ENCODE measurements at regions of chr9 and their contacts with region 1.

Region 1: GRCh38 chr9:122125158-122125508 is 32.0 kb upstream of the TTLL11 start:
- DNase-seq: peak; percentile 91
- CTCF ChIP-seq: peak; percentile 93

Region 2: DNA sequence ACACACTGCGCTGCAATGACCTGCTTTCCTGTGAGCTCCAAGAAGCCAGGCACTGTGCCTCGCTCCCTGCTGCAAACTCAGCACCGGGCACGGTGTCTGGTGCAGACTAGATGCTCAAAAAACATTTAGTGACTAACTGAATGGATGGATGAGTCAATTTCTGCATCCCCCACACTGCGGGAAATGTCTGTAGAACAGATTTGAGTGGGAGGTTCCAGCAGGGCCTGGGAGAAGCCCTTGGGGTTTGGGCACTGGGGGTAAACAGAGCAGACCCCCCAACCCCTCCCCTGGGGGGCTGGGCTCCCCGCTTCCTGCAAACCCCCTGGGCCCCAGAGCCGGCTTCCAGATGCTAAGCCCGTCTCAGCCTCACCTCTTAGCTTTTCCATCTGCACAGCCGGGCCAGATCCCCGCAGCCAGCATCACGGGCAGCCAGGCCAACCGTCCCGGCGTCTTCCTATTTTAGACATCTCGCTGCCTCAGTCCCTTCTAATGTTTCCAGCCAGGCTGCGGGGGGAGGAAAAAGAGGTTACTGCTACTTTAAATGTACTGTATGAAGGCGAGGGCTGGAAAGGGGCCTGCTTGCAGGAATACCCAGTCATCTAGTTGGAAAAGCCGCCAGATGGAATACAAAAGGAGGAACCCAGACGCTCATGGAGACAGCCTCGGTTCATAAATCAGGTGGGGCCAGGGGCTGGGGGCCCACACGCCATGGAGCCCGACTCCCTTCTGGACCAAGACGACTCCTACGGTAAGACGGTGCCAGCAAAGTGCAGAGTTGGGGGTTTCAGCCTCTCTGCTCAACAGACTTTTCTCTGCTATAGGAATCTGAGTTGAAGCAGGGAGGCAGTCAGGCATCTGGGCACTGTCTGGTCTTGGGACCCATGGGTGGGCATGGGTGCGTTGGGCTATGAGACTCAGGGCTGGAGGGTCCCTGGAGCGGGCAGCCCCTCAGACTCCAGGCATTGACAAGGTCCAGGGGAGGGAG is 558.4 kb before region 1 on chr9:
- in situ Hi-C with region 1: no loop called
- DNase-seq: no peak
- CTCF ChIP-seq: no peak

Region 3: GRCh38 chr9:121827251-121827967 is 297.7 kb before region 1 on chr9:
- in situ Hi-C with region 1: no loop called
- DNase-seq: no peak
- CTCF ChIP-seq: no peak

Region 4: GRCh38 chr9:122350638-122351355 is 225.7 kb after region 1 on chr9:
- in situ Hi-C with region 1: loop called (anchors 10 kb)
- DNase-seq: peak; percentile 86
- CTCF ChIP-seq: peak; percentile 97

Region 5: DNA sequence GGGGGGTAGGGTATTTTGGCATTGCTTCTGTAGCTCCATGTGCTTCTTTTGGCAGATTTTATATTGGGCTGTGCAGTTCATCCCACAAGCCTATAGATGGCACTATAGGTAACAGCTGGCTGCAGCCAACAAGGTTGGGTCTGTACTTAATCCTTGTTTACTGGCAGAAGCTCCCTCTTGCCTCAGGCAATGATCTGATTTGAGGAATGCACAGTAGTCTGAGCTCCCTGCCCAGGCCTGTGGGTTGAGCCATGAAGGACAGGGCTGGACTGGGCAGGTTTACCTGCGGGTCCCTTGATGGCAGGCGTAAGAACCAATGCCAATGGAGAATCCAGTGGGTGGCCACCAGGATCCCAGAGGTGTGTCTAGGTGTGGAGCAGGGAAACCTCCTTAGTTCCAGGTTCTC is 373.8 kb after region 1 on chr9:
- in situ Hi-C with region 1: no loop called
- DNase-seq: peak; percentile 32
- CTCF ChIP-seq: peak; percentile 79

Measured in GM13977 (cell line).